Naive thymus-derived CD8-positive, alpha-beta T cell (primary cell): ENCODE measurements at regions of chr9 and their contacts with region 1.

Region 1: GRCh38 chr9:83980395-83981125 is at the start of gene RMI1:
- DNase-seq: peak; percentile 98 to 100 (median 99)
- ATAC-seq: peak; percentile 73 to 77
- H3K4me3 Mint-ChIP-seq: peak within 1 kb of the TSS; percentile 91 to 100 (median 98)
- H3K27ac Mint-ChIP-seq: peak within 1 kb of the TSS; percentile 97 to 100 (median 100)
- H3K4me1 Mint-ChIP-seq: peaks cover 23 to 43% (median 37%) of the 10 kb centered on the region in 4 donors
- H3K27me3 Mint-ChIP-seq: peaks cover 0 to 6% (median 0%) of the 10 kb centered on the region in 5 donors
- polyA plus RNA-seq, gene RMI1: 5.3 to 6.7 (median 6.3) TPM

Region 2: GRCh38 chr9:83622939-83623678 is 357.5 kb before region 1 on chr9 and contains the start of gene IDNK:
- POLR2A ChIA-PET with region 1: interaction called, 16 read pairs
- DNase-seq: peak; percentile 34 to 77 (median 60)
- ATAC-seq: peak; percentile 88 to 91
- H3K4me3 Mint-ChIP-seq: peak within 1 kb of the TSS; percentile 91 to 96 (median 94)
- H3K27ac Mint-ChIP-seq: peak within 1 kb of the TSS; percentile 89 to 98 (median 96)
- H3K4me1 Mint-ChIP-seq: peaks cover 23 to 41% (median 37%) of the 10 kb centered on the region in 4 donors
- H3K27me3 Mint-ChIP-seq: no peaks in the 10 kb centered on the region
- polyA plus RNA-seq, gene IDNK: 15.8 to 19.3 (median 19.1) TPM

Region 3: DNA sequence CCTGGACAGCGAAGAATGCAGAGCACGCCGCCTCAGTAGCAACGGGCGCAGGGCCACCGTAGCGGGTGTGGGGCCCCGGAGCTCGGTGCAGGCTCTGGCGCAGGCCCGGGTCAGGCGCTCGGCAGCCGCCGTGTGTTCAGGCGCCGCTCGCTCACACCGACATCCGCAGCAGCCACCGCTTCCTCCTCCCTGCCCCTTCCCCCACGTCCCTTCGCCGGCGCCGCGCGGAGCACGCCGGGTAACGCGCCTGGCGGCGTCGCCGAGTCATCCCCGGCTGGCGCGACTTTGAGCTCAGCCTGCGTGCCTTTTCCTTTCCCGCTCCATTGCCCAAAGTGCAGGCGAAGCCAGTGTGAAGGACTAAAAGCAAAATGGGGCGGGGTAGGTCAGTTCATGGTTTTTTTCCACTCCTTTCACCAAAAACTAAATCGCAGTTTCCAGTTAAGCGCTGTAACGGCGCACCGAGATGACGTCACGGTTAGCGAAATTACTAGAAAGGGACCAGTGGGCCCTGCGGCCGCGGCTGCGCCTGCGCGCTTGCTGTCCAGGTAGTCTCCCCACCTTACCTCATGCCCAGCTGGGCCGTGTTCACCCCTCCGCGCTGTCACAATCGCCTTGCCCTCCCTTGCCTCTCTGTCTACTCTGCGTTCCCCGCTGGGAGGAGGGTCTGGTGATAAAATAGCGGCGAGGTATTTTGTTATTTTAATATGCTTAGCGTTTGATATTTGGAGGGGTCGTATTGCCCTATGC is 272.6 kb before region 1 on chr9 and contains the start of gene UBQLN1:
- POLR2A ChIA-PET with region 1: interaction called, 39 read pairs
- DNase-seq: peak; percentile 83 to 98 (median 92)
- ATAC-seq: peak; percentile 82 to 83
- H3K4me3 Mint-ChIP-seq: peak within 1 kb of the TSS; percentile 85 to 100 (median 94)
- H3K27ac Mint-ChIP-seq: peak within 1 kb of the TSS; percentile 96 to 100 (median 99)
- H3K4me1 Mint-ChIP-seq: peaks cover 26 to 50% (median 42%) of the 10 kb centered on the region in 4 donors
- H3K27me3 Mint-ChIP-seq: no peaks in the 10 kb centered on the region
- polyA plus RNA-seq, gene UBQLN1: 65.4 to 70.8 (median 67.6) TPM

Region 4: GRCh38 chr9:83920927-83921707 is 59.4 kb before region 1 on chr9 and contains the start of gene KIF27:
- POLR2A ChIA-PET with region 1: interaction called, 73 read pairs
- DNase-seq: peak; percentile 89 to 98 (median 94)
- ATAC-seq: peak; percentile 78 to 83
- H3K4me3 Mint-ChIP-seq: peak within 1 kb of the TSS; percentile 88 to 96 (median 92)
- H3K27ac Mint-ChIP-seq: peak within 1 kb of the TSS; percentile 81 to 99 (median 98)
- H3K4me1 Mint-ChIP-seq: peaks cover 5 to 17% (median 14%) of the 10 kb centered on the region in 4 donors
- H3K27me3 Mint-ChIP-seq: no peaks in the 10 kb centered on the region
- polyA plus RNA-seq, gene KIF27: 1.1 to 2.1 (median 1.3) TPM

Region 5: GRCh38 chr9:83956434-83957247 is 23.9 kb before region 1 on chr9:
- POLR2A ChIA-PET with region 1: interaction called, 141 read pairs
- DNase-seq: peak; percentile 20 to 75 (median 50)
- ATAC-seq: peak; percentile 76 to 82
- H3K4me3 Mint-ChIP-seq: peak overlapping the region; percentile 92 to 100 (median 97)
- H3K27ac Mint-ChIP-seq: peak overlapping the region; percentile 92 to 99 (median 96)
- H3K4me1 Mint-ChIP-seq: peaks cover 10 to 22% (median 17%) of the 10 kb centered on the region in 4 donors
- H3K27me3 Mint-ChIP-seq: no peaks in the 10 kb centered on the region

Region 6: DNA sequence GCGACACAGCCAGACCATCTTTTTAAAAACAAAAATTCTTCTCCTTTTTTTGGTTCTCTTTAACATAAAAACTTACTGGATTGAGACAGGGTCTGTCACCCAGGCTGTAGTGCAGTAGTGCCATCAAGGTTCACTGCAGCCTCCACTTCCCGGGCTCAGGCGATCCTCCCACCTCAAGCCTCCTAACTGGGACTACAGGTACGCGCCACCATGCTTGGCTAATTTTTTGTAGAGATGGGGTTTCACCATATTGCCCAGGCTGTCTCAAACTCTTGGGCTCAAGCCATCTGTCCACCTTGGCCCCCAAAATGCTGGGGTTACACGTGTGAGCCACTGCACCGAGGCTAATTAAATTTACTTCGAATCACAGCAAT is 14.4 kb before region 1 on chr9:
- POLR2A ChIA-PET with region 1: interaction called, 141 read pairs
- DNase-seq: no peak
- ATAC-seq: peak; percentile 11 to 16
- H3K4me3 Mint-ChIP-seq: peak overlapping the region in 1 of 10 donors; percentile 18
- H3K27ac Mint-ChIP-seq: peak overlapping the region in 8 of 10 donors; percentile 5 to 89 (median 33)
- H3K4me1 Mint-ChIP-seq: peaks cover 10 to 30% (median 17%) of the 10 kb centered on the region in 4 donors
- H3K27me3 Mint-ChIP-seq: no peaks in the 10 kb centered on the region

Region 7: DNA sequence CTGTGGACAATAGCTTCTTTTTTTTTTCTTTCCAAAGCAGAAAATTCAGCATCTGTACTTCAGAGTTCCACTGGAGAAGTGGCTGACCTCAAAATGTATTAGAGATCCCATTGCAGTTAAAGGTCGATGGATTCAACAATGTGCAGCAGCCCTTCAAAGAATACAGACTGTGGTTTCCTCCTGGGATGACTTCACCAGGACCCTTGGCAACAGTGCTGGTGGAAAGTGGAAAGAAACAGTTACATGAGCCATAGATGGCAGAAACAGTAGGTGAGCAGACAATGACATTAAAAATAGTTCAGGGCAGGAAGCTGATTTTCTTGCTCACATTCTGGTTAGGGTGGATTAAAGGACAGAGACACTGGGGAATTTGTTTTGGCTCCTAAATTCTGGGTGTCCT is 297.6 kb after region 1 on chr9:
- POLR2A ChIA-PET with region 1: no interaction called
- DNase-seq: no peak
- ATAC-seq: no peak
- H3K4me3 Mint-ChIP-seq: no peak overlapping the region
- H3K27ac Mint-ChIP-seq: no peak overlapping the region
- H3K4me1 Mint-ChIP-seq: no peaks in the 10 kb centered on the region
- H3K27me3 Mint-ChIP-seq: peaks cover 13 to 33% (median 16%) of the 10 kb centered on the region in 5 donors

Region 8: DNA sequence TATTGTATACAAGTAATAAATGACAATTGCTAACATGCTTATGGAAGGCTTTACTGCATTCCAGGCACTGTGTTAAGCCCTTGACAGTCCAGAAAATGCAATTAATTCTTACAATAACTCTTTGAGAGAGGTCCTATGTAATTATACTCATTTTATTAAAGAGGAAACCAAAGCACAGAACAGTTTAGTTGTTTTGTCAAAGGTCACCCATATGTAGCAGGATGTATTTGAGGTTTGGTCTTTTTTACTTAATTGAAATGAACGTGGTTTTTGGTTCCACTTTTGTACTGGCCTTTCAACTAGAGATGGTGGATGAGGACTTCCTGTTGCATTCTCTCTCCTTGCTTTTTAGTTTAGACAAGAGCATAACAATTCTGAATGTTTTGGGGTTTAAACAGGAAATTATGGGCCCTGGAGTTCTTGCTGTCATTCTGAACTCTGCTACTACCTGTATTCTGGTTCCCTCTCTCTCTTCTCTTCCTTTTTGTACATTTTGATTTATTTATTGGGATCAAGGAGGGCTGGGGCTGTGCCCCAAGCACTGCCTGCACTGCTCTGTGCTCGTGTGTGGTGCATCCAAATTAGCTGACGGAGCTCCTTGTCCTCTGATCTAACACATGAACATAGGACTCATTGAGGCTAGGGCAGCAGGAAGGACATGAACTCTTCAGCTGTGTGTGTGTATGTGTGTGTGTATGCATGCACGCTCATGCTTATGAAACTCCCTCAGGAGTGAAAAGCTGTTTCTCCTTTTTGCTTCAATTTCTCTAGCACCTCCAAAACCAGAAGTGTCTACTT is 312.6 kb after region 1 on chr9:
- POLR2A ChIA-PET with region 1: interaction called, 14 read pairs
- DNase-seq: peak in 3 of 10 donors; percentile 13 to 30 (median 22)
- ATAC-seq: peak; percentile 43 to 55
- H3K4me3 Mint-ChIP-seq: peak overlapping the region; percentile 45 to 87 (median 72)
- H3K27ac Mint-ChIP-seq: peak overlapping the region; percentile 85 to 99 (median 93)
- H3K4me1 Mint-ChIP-seq: peaks cover 32 to 56% (median 46%) of the 10 kb centered on the region in 4 donors
- H3K27me3 Mint-ChIP-seq: peaks cover 0 to 5% (median 0%) of the 10 kb centered on the region in 5 donors